ENCODE measurements at regions of chr18 and their contacts with region 1.

Region 1: GRCh38 chr18:35926884-35927283 is 45.6 kb upstream of the RMP24 start:
- DNase-seq: no peak
- ATAC-seq: no peak
- H3K4me3 ChIP-seq: no peak overlapping the region
- H3K27ac ChIP-seq: no peak overlapping the region
- H3K4me1 ChIP-seq: no peaks in the 10 kb centered on the region
- H3K27me3 ChIP-seq: peaks cover 0 to 14% (median 7%) of the 10 kb centered on the region in 7 donors
- CTCF ChIP-seq: no peak

Region 2: GRCh38 chr18:35355140-35355618 is 571.7 kb before region 1 on chr18:
- intact Hi-C with region 1: no loop called
- DNase-seq: peak; percentile 54 to 75
- ATAC-seq: peak; percentile 87 to 99 (median 96)
- H3K4me3 ChIP-seq: peak overlapping the region in 4 of 10 donors; percentile 11 to 32 (median 30)
- H3K27ac ChIP-seq: no peak overlapping the region
- H3K4me1 ChIP-seq: peaks cover 0 to 8% (median 0%) of the 10 kb centered on the region in 9 donors
- H3K27me3 ChIP-seq: no peaks in the 10 kb centered on the region
- CTCF ChIP-seq: peak; percentile 51 to 85 (median 78)

Region 3: DNA sequence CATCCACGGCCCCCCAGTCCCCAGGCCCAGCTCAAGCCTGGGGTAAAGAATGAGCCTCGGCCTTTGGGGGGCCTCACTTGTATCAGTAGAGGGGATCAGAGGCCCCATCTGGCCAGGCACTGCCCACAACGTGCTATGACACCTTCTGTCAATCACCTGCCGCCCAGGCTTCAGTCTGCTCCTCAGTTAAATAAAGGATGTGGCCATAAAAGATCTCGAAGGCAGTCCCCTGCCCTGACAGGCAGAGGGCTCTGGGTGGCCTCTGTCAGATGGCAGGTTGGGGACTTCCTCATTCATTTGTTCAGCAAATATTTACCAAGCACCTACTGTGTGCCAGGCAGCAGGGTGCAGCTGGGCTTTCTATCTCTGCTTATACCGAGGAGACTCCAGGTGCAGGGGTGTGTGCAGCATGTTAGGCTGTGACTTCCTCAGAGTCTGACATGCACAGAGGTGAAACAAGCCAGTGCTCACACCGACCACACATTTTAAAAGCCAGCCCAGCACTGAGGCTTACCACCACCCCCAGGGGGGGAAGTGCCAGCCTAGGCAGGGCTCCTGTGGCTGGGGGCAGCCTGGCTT is 178.9 kb before region 1 on chr18:
- intact Hi-C with region 1: loop called in 1 of 10 experiments (anchors 1 kb)
- DNase-seq: no peak
- ATAC-seq: no peak
- H3K4me3 ChIP-seq: no peak overlapping the region
- H3K27ac ChIP-seq: no peak overlapping the region
- H3K4me1 ChIP-seq: no peaks in the 10 kb centered on the region
- H3K27me3 ChIP-seq: no peaks in the 10 kb centered on the region
- CTCF ChIP-seq: no peak